ENCODE measurements at regions of chr22 and their contacts with region 1.

Region 1: GRCh38 chr22:45903355-45904149 is 73.4 kb downstream of the WNT7B start:
- DNase-seq: no peak
- H3K4me3 ChIP-seq: no peak overlapping the region
- H3K4me1 ChIP-seq: no peaks in the 10 kb centered on the region
- H3K27me3 ChIP-seq: peaks cover 22% of the 10 kb centered on the region; the same call in 1 of the 2 replicates

Region 2: GRCh38 chr22:46149512-46150033 is 246.0 kb after region 1 on chr22:
- in situ Hi-C with region 1: loop called (anchors 25 kb)
- DNase-seq: peak in 1 of 2 experiments; percentile 69
- H3K4me3 ChIP-seq: peak overlapping the region; percentile 52
- H3K4me1 ChIP-seq: peaks cover 3% of the 10 kb centered on the region; the same call in 1 of the 2 replicates
- H3K27me3 ChIP-seq: peaks cover 23% of the 10 kb centered on the region